ENCODE measurements at regions of chr12 and their contacts with region 1.

Region 1: DNA sequence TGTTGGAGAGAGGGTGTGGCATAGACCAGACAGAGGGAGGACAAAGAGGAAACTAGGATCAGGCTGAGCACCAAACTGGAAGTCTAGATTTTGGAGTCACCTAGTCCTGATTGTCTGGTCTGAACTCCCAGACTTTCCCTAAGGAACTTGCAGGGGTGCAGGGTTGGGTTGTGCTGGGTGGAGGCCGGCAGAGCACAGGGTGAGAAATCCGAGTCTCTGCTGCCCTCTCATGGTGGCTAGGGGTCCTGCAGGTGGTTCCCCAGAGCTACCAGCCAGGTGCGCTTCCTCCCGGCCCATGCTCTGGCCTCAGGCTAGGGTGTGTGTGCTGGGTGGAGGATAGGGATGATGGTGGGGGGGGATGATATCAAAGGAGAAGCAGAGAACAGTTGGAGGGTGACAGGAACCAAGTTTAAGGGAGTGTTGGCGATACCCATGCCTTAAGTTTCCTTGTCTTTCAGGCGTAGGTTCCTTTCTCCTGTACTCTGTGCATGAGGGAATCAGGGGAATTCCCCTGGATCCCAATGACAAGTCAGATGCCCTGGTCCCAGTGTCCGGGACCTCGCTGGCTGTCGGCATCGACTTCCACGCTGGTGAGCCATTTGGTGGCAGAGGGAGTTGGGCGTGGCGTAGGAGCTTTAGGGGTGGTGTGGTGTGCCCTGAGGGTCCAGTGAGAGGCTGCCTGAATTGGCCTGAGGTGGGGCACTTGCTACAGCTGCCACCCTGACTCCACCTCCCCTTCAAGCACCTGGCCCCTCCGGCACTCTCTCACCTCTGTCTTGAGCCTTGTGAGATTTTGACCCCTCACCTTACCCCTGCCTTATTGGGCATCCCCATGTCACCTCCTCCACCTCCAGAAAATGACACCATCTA is 33.4 kb upstream of the NXPH4 start:
- DNase-seq: peak; percentile 86
- H3K4me3 ChIP-seq: no peak overlapping the region
- H3K27ac ChIP-seq: no peak overlapping the region
- H3K4me1 ChIP-seq: no peaks in the 10 kb centered on the region
- H3K27me3 ChIP-seq: no peaks in the 10 kb centered on the region
- CTCF ChIP-seq: peak; percentile 88 to 94 (median 91)
- EP300 ChIP-seq: no peak
- POLR2A ChIP-seq: no peak

Region 2: GRCh38 chr12:56751712-56752598 is 431.2 kb before region 1 on chr12 and contains the start of gene PRIM1:
- in situ Hi-C with region 1: loop called in 1 of 4 experiments (anchors 25 kb)
- intact Hi-C with region 1: no loop called
- DNase-seq: peak; percentile 87
- H3K4me3 ChIP-seq: peak within 1 kb of the TSS; percentile 8 to 89 (median 74)
- H3K27ac ChIP-seq: peak within 1 kb of the TSS; percentile 80 to 90 (median 83)
- H3K4me1 ChIP-seq: peaks cover 0 to 17% (median 9%) of the 10 kb centered on the region in 4 donors
- H3K27me3 ChIP-seq: no peaks in the 10 kb centered on the region
- CTCF ChIP-seq: peak in 4 of 5 experiments; percentile 25 to 60 (median 48)
- EP300 ChIP-seq: no peak
- POLR2A ChIP-seq: peak; percentile 33
- total RNA-seq, gene PRIM1: 1.4 to 10.6 (median 5.6) TPM in 3 of 4 donors, not detected in the other

Region 3: DNA sequence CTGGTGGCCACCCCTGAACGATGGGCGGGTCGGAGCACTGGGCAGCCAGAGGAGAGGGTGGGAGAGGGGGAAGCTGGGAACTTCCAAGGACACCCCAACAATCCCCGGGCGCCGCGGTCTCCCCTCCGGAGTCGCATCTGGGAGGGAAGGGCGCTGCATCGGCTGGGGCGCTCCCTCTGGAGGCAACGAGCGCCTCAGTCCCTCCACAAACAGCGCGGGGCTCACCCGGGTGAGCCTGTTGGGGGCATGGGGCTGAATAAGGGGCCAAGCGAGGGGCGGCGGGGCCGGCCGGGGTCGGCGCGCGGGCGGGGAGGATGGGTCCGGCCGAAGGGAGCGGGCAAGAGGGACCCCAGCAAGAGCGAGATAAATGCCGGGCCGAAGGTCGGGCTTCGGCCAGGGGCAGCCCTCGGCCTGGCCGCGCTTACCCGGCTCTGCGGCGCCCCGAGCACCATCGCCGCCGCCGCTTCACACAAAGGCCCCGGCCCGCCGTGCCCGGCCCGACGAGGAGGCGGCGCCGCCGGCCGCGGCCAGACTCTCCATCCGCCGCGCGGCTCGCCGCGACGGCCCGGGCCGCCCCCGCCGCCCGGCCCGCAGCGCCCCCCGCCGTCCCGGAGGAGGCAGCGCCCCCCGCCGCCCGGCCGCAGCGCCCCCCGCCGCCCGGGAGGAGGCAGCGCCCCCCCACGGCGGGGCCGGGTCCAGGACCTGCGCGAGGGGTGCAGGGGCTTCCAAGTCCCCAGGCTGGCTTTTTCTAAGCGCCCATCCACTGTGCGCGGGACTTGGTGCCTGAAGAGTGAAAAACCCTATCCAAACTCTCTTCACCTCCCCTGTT is 177.0 kb before region 1 on chr12 and contains the start of gene ZBTB39:
- in situ Hi-C with region 1: loop called in 1 of 4 experiments (anchors 10 kb)
- intact Hi-C with region 1: loop called (anchors 10 kb)
- DNase-seq: peak; percentile 65
- H3K4me3 ChIP-seq: peak within 1 kb of the TSS; percentile 72 to 100 (median 82)
- H3K27ac ChIP-seq: peak within 1 kb of the TSS; percentile 82 to 89 (median 86)
- H3K4me1 ChIP-seq: peaks cover 14 to 41% (median 32%) of the 10 kb centered on the region in 4 donors
- H3K27me3 ChIP-seq: no peaks in the 10 kb centered on the region
- CTCF ChIP-seq: peak; percentile 31 to 51 (median 34)
- EP300 ChIP-seq: no peak
- POLR2A ChIP-seq: no peak
- total RNA-seq, gene ZBTB39: 3.4 to 8.0 (median 4.8) TPM

Region 4: GRCh38 chr12:57069523-57069922 is 113.6 kb before region 1 on chr12:
- in situ Hi-C with region 1: no loop called
- intact Hi-C with region 1: loop called (anchors 5 kb)
- DNase-seq: peak; percentile 66
- H3K4me3 ChIP-seq: no peak overlapping the region
- H3K27ac ChIP-seq: peak overlapping the region; percentile 57 to 81 (median 78)
- H3K4me1 ChIP-seq: peaks cover 0 to 14% (median 4%) of the 10 kb centered on the region in 4 donors
- H3K27me3 ChIP-seq: no peaks in the 10 kb centered on the region
- CTCF ChIP-seq: peak; percentile 82 to 95 (median 90)
- EP300 ChIP-seq: no peak
- POLR2A ChIP-seq: no peak

Region 5: DNA sequence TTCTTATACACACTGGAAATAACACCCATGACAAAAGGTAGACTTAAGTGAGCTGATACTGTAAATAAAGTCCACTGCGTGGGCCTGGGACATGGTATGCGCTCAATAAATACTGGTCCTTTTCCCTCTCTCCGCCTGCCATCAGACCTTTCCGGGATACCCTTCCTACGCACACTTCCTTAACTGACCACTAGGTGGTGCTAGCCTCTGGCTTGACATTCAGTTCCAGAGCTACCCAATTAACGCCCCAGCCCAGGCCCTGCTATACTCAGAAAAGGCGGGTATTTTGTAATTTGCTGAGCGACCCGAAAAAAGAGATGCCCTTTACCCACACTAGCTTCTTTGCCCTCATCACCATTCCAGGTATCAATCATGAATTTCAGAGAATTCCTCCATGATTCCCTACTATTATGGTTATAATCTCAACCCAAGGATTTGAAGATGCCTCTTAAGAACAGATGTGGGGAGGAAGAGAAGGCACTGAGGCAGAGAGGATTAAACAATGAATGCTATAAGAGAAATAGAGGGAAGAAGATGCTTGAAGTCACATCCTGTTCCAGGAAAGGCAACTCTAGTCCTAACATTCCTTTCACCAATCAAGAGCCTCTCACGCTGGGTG is 58.8 kb before region 1 on chr12:
- in situ Hi-C with region 1: loop called (anchors 5 kb)
- intact Hi-C with region 1: loop called (anchors 2 kb)
- DNase-seq: peak; percentile 84
- H3K4me3 ChIP-seq: no peak overlapping the region
- H3K27ac ChIP-seq: no peak overlapping the region
- H3K4me1 ChIP-seq: peaks cover 7 to 14% (median 11%) of the 10 kb centered on the region in 4 donors
- H3K27me3 ChIP-seq: no peaks in the 10 kb centered on the region
- CTCF ChIP-seq: peak; percentile 96 to 98 (median 97)
- EP300 ChIP-seq: no peak
- POLR2A ChIP-seq: no peak

Measured in transverse colon (tissue), 4 donors.